CD14-positive monocyte (primary cell): ENCODE measurements at regions of chr17 and their contacts with region 1.

Region 1: GRCh38 chr17:77437017-77437416 is 296.2 kb downstream of the SEC14L1 start:
- DNase-seq: peak; percentile 82 to 88 (median 83)
- H3K4me3 ChIP-seq: peak overlapping the region in 1 of 3 experiments; percentile 63
- H3K4me3 Mint-ChIP-seq: peak overlapping the region; percentile 64 to 74
- H3K27ac ChIP-seq: peak overlapping the region; percentile 82 to 92
- H3K27ac Mint-ChIP-seq: peak overlapping the region; percentile 79 to 95 (median 87)
- H3K4me1 ChIP-seq: peaks cover 85 to 89% of the 10 kb centered on the region in 2 donors
- H3K4me1 Mint-ChIP-seq: peaks cover 86% of the 10 kb centered on the region
- H3K27me3 ChIP-seq: no peaks in the 10 kb centered on the region
- H3K27me3 Mint-ChIP-seq: peaks cover 0 to 3% (median 2%) of the 10 kb centered on the region in 3 donors
- CTCF ChIP-seq: peak; percentile 11

Region 2: DNA sequence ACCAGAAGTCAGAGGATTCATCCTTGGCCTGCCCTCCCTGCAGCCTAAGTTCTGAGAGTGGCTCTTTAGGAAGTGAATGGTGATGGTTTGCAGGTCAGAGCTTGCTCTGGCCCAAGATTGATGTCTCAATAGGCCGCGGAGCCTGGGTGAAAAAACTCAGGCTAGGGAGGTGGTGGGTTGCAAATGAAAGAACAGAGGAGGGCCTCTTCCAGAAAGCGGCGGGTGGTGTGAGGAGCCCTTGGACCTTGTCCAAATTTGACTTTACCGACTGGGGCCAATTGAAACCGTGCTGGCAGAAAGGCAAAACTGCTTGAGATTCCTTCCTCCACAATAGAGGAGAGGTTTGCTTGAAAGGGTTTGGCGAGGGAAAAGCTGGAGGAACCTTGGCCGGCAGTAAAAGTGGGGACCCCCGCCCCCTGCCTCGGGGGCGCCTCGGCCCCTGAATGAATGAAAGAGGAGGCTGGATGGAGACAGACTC is 35.0 kb after region 1 on chr17:
- intact Hi-C with region 1: loop called (anchors 5 kb)
- DNase-seq: peak in 1 of 3 donors; percentile 37
- H3K4me3 ChIP-seq: peak overlapping the region in 1 of 3 experiments; percentile 50
- H3K4me3 Mint-ChIP-seq: peak overlapping the region; percentile 55 to 81
- H3K27ac ChIP-seq: peak overlapping the region; percentile 58 to 73
- H3K27ac Mint-ChIP-seq: peak overlapping the region; percentile 73 to 94 (median 87)
- H3K4me1 ChIP-seq: peaks cover 73 to 87% of the 10 kb centered on the region in 2 donors
- H3K4me1 Mint-ChIP-seq: peaks cover 90% of the 10 kb centered on the region
- H3K27me3 ChIP-seq: no peaks in the 10 kb centered on the region
- H3K27me3 Mint-ChIP-seq: peaks cover 0 to 3% (median 2%) of the 10 kb centered on the region in 3 donors
- CTCF ChIP-seq: no peak